Mammary epithelial cell (primary cell): ENCODE measurements at regions of chr9 and their contacts with region 1.

Region 1: DNA sequence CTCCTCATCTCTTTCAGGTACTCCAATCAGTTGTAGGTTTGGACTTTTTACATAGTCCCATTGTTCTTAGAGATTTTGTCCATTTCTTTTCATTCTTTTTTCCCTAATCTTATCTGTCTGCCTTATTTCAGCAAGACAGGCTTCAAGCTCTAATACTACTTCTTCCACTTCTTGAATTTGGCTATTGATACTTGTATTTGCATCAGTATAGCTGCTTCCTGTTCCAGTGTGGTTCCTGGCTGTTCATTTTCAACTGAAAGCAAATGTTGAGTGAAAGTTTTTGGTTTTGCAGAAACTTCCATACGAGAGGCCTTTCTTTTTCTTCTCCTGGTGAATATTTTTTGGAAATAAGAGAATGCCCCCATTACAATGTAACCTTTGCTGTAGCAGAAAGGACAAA is 12.0 kb upstream of the IFNA1 start:
- DNase-seq: no peak
- H3K4me3 ChIP-seq: no peak overlapping the region
- H3K27ac ChIP-seq: no peak overlapping the region
- H3K4me1 ChIP-seq: no peaks in the 10 kb centered on the region
- H3K27me3 ChIP-seq: peaks cover 8% of the 10 kb centered on the region
- CTCF ChIP-seq: no peak

Region 2: GRCh38 chr9:21340735-21341134 is 87.5 kb before region 1 on chr9:
- CTCF ChIA-PET with region 1: no interaction called
- dilution Hi-C with region 1: loop called (anchors 5 kb)
- in situ Hi-C with region 1: no loop called
- intact Hi-C with region 1: no loop called
- DNase-seq: no peak
- H3K4me3 ChIP-seq: no peak overlapping the region
- H3K27ac ChIP-seq: no peak overlapping the region
- H3K4me1 ChIP-seq: no peaks in the 10 kb centered on the region
- H3K27me3 ChIP-seq: no peaks in the 10 kb centered on the region
- CTCF ChIP-seq: no peak

Region 3: DNA sequence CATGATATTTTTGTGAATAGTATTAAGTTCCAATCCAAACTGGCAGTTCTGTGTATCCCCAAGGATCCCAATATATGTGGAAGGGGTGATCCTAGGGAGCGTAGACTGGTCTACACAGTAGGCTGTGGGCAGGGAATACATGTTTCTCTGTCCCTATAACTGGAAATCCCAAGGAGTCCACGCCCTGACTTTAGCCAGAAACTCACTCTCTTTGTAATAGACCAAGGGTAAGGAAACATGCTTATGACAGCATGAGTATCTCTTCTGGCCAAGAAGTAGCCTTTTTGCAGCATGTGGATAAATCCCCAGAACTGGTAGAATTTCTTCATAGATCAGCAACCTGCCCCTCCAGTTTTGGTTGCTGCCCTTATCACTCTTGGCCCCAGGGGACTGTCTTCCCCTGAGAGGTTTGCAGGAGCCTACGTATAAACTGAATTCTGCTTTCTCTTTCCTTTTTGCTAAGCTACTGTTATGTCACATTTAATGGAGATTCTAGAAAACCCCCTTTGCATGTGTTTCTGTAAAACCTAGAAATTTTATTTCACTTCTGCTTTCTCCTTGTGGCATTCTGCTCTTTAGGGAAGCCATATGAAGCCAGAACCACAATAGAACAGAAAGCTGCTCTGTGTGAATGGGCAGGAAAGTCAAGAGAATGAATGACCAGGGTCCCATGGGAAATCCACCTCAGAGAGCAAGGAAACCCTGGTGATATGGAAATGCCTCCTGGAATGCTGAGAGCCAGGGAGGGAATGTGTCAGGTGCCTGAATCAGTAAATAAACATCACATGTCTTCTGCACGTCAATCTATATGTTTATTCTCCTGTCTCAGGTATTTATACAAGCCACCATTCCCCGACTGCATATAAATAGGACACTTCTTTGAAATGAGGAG is 46.5 kb before region 1 on chr9:
- CTCF ChIA-PET with region 1: no interaction called
- dilution Hi-C with region 1: no loop called
- in situ Hi-C with region 1: no loop called
- intact Hi-C with region 1: no loop called
- DNase-seq: no peak
- H3K4me3 ChIP-seq: no peak overlapping the region
- H3K27ac ChIP-seq: no peak overlapping the region
- H3K4me1 ChIP-seq: no peaks in the 10 kb centered on the region
- H3K27me3 ChIP-seq: peaks cover 19% of the 10 kb centered on the region
- CTCF ChIP-seq: no peak

Region 4: DNA sequence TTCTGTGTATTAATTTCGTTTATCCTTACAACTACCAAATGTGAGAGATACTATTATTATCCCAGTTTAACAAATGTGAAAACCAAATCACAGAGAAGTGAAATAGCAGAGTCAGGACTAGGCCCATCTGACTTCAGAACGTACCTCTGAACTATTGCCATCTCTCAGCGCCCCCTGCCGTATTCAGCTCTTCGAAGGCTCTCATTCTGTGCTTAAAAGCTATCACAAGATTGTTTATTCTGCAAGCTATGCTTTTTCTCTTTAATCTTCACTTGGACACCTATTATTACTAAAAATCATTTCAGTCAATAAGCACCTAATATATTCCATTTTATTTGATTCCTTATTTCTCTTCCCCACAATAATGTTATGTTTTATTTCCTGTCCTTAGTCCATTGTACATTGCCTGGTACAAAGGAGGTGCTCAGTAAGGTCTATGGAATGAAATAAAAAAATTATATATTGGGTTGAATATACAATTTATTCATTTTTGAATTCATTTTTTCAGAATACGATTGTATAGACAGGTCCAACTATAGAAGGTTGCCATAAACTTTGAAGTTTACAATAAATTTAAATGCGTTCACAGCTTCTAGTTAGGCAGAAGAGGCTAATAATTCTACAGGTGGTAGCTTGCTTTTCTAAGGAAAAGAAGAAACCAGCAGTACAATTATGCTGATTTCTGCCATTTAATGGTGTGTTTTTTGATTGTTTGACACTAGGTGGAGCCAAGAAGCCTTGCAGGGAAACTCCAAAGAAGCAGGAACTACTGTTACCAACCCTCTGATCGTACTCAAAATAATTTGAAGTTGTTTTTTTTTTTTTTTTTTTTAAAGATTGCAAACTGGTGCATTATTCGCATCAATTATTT is 816.1 kb after region 1 on chr9:
- CTCF ChIA-PET with region 1: no interaction called
- dilution Hi-C with region 1: no loop called
- in situ Hi-C with region 1: no loop called
- intact Hi-C with region 1: no loop called
- DNase-seq: peak; percentile 58
- H3K4me3 ChIP-seq: peak overlapping the region in 1 of 3 experiments; percentile 19
- H3K27ac ChIP-seq: no peak overlapping the region
- H3K4me1 ChIP-seq: peaks cover 30% of the 10 kb centered on the region
- H3K27me3 ChIP-seq: no peaks in the 10 kb centered on the region
- CTCF ChIP-seq: peak; percentile 59 to 77